HEK293T (cell line): ENCODE measurements at regions of chr12 and their contacts with region 1.

Region 1: GRCh38 chr12:15882118-15882971 is at the start of gene STRAP:
- DNase-seq: peak; percentile 92

Region 2: DNA sequence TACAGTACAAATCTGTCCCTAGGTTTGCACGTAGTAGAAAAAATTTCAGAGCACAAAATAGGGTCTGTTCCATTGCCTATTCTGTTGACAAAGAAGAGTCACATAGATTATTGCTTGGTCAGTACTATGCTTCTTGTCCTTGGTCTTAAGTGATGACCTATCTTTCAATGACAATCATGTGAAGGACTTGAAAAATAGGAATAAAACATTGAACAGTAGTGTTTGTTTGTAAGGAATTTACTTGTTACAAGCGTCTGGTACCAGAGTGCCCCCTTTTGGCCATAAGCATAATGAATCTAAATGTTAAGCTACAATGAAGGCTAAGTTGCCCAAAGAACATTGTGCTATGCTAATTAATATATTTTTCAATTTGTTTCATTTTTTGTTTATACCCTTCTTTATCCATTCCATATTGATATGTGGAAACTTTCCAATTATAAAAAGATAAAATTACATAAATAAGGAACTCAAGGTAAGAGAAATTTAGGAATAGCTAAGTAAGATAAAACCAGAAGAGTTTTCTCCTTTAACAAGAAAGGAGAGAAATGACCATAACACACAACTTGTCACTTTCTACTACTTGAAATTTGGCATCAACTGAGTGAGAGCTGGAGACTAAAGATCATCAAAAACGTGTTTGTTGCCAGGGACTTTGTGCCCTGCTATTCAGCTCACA is 297.8 kb before region 1 on chr12:
- CTCF ChIA-PET with region 1: no interaction called
- POLR2A ChIA-PET with region 1: no interaction called
- DNase-seq: peak; percentile 23

Region 3: DNA sequence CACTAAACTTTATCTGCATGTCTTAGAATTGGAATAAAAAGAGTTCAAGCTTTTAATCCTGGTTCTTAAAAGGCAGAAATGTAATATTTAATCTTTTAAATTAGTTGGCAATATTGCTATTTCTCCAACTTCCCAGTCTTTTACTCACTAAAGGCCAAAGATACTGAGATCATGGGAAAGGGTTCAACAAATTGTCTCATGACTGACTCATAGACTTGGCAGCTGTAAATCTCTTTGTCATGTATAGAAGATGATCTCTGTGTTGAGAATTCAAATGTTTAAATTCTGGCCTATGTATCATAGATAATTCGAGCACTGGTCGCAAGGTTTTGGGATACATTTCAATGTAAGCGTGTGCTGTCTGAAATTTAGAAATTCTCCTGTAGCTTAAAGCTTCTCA is 40.2 kb before region 1 on chr12:
- CTCF ChIA-PET with region 1: no interaction called
- POLR2A ChIA-PET with region 1: no interaction called
- DNase-seq: no peak

Region 4: DNA sequence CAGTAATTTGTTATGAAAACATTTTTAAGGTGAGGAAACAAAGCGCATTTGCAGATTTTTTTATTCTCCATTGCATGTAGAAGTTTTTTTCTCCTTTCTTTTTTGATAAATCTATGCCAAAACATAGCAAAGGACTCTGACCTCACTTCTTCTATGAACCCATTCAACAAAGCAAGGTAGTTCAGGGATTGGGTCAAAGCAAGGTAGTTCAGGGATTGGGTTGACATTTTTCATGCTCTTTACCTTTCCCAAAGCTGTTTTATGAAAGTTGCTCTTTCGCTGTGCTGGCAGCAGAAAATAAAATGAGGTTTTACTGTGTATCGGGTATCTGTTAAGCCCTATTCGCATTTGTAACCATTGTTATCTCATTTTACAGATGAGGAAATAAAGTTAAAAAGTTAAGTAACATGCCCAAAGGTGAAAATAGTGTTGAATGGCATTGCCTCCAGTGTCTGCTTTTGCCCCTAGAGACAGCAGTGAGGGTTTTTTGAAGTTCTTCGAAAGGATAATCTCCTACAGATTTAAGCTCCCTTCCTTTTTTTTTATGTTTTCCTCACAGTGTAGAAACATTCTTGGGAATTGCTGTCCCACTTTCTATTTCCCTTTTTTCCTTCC is 10.4 kb after region 1 on chr12:
- CTCF ChIA-PET with region 1: interaction called, 5 read pairs
- POLR2A ChIA-PET with region 1: interaction called, 12 read pairs
- DNase-seq: no peak

Region 5: DNA sequence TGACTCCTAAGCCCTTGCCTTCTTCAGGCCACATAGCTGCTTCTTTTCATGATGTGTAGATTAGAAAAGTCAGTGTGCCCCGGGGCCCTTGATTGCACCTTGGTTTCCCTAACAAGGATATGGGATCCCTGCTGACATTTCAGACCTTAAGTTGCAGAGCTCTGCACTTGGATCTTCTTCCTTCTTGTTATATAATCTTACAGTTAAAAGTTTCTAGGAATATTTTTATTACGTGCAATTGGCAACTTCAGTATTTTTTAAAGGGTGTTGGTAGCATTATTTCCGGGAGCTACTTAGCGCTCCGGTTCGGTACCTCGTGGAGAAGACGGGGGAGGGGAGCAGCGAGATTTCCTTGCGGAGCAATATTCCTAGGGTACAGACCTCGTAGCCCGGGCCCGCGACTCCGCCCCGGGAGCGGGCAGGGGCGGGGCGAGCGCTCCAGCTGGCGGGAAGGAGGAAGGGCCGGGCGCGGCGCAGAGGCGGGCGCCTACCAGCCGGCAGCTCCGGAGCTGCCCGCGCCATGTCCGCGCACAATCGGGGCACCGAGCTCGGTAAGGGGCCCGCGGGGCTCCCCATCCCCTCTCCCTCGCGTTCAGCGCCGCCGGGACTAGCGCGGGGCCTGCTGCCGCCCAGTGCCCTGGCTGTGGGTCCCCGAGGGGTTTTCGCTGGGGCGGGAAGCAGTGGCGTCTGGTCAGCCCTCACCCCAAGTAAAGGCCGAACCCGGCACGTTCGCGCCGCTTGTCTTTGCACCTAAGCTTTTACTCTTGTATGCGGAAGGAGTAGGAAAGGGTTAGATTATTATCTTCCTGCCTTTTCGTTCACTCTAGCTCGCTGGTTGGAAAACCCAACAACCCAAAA is 28.7 kb after region 1 on chr12 and contains the start of gene DERA:
- CTCF ChIA-PET with region 1: no interaction called
- POLR2A ChIA-PET with region 1: interaction called, 19 read pairs
- DNase-seq: peak; percentile 85

Region 6: GRCh38 chr12:15979096-15980092 is 97.0 kb after region 1 on chr12:
- CTCF ChIA-PET with region 1: no interaction called
- POLR2A ChIA-PET with region 1: no interaction called
- DNase-seq: peak; percentile 70

Region 7: GRCh38 chr12:16094437-16094836 is 212.1 kb after region 1 on chr12:
- CTCF ChIA-PET with region 1: no interaction called
- POLR2A ChIA-PET with region 1: no interaction called
- DNase-seq: no peak